ENCODE measurements at regions of chr15 and their contacts with region 1.

Region 1: DNA sequence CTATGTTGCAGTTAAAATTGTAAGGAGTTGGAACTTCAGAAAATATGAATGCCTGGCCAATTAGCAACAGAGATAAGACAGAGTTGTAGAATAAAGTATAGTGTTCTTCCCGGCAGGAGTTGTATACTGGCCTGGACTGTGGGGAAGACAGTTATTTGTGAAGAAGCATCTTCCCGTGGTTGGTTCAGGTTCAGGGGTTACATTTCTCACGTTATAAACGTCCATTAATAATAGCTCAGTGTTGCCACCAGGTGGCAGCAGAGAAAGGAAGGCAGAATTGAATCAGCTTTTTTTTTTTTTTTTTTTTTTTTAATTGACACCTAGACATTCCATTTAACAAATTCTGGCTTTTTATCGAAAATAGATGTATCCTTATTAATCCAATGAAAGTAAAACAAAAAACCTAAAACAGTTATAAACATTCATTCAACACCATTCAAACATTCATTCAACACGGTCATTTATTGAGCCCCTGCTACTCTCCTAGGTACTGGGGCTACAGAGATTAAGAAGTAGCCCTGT is 66.4 kb upstream of the NR2E3 start:
- DNase-seq: peak; percentile 71
- ATAC-seq: peak; percentile 30 to 65

Region 2: DNA sequence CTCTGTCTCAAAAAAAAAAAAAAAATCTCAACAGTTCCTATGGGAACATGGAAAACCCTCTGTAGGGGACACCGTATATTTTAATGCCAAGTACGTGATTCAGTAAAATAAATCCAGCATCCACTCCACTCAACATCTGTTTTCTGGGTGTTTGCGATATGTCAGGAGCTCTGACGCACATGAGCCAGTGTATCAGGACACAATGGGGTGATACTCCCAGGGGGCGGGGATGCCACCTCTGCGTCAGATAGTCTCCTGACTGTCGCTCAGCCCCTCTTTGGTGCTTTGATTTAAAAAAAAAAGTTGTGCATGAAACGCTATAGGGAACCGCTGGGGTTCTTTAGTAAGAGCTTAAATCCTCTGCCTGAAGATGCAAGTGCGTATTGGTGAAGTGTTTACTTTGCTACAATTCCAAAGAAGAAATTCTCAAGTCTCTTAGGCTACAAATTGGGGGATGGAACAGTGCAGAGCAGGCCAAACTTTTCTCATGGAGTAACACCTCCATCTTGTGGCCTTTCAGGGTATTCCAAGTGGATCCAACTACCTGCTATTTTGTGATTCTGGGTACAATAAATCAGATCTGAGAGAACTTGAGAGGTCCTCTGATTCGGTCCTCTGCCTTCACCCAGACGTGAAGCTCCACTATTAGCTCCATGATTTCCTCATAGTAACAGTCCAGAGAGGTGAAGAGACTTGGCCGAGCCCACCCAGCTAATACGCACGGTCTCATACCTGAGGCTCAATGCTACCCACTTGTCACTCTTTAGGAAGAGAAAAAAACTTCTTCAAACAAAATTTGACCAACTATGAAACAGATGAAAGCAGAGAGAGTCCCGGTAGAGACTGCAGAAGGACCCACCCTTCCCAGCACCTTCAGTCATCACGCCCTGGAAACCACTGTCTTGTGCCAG is 57.2 kb after region 1 on chr15:
- intact Hi-C with region 1: loop called in 1 of 2 experiments (anchors 2 kb)
- DNase-seq: no peak
- ATAC-seq: peak; percentile 86 to 90

Region 3: DNA sequence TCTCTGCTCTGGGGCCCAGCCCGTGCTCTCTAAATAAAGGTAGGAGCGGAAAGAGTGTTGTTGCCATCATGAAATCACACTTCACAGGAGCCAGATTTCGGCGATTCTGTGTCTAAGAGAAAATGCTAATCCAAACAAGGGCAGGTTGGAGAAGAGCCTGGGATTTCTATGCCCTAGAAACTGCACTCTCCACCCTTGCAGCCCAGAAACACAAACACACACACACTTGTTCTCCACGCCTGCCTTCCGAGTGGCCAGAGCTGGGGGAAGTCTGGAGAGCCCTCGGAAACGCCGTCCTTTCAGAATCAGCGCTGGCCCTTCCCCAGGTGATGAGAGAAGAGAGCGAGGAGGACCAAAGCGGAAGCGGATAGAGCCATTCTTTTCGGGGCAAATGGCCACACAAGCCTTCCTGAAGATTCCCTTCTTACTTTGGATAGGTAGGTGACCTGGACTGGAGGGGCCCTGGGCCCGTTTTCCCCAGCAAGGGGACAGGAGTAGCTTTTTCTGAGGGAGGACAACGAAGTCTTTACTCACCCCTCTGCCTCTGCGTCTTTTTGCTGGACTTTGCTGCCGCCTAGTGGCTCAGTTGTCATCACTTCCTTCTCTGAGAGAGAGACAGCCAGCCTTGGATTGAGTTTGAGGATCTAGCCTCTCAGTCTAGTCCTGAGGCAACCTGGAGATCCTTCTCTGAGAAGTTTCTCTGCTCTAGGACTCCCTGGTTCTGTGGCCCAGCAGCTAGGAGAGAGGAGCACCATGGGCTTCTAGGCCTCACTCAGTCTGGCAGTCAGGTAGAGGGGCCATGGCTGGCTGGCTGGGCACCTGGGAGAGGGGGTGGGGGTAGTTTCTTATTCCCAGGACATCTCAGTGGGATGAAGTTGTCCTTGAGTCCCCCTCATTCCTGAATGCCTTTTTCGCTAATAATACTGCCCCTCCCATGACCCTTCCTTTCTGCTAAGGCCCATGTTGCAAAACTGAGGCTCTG is 412.0 kb after region 1 on chr15:
- intact Hi-C with region 1: loop called in 1 of 2 experiments (anchors 5 kb)
- DNase-seq: peak; percentile 87
- ATAC-seq: peak; percentile 91 to 97